ENCODE measurements at regions of chr12 and their contacts with region 1.

Region 1: GRCh38 chr12:54005853-54006686 is 2.7 kb upstream of the HOXC8 start:
- DNase-seq: peak; percentile 91
- H3K4me3 ChIP-seq: peak overlapping the region in 2 of 4 donors; percentile 13 to 16
- H3K27ac ChIP-seq: no peak overlapping the region
- H3K4me1 ChIP-seq: peaks cover 0 to 18% (median 15%) of the 10 kb centered on the region in 4 donors
- H3K27me3 ChIP-seq: peaks cover 82 to 100% (median 99%) of the 10 kb centered on the region in 3 donors
- CTCF ChIP-seq: peak; percentile 83 to 93 (median 89)
- EP300 ChIP-seq: no peak
- POLR2A ChIP-seq: no peak

Region 2: DNA sequence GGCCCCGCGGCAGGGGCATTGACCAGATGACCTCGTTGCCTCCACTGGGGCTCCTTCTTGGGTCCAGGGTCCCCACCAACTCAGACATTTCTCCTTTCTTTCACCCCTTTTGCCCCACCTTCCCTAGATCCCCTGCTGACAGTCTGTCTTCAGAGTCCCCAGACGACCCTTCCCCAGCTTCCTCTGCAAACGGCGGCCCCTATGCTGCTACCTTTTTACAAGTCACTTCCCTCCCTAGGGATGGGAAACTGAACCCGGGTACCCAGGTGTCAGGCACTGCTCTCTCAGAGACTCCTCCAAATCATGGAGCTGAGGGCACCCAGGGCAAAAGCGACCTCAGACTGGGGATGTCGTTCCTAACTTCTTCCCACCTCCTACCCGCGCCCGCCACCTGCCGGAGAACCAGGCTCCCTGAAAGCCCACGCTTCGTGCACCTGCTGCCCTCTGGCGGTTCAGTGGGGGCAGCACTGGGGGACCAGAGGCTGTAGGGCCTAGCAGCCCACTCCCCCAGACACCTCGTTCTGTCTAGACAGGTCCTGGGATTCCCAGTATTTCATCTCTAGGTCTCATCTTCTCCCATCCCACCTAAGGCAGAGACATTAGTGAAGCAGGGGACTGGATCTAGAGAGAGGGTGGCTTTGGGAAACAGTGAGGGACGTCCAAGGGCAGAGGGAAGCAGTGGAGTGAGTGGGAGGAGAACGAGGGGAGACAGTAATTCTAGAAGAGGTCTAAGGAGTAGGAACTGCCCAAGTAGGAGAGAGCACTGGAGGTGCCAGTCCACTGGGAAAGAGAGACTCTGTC is 373.5 kb after region 1 on chr12:
- intact Hi-C with region 1: loop called (anchors 10 kb)
- DNase-seq: peak; percentile 96
- H3K4me3 ChIP-seq: peak overlapping the region; percentile 32 to 57 (median 55)
- H3K27ac ChIP-seq: peak overlapping the region; percentile 77 to 84 (median 79)
- H3K4me1 ChIP-seq: peaks cover 0 to 26% (median 18%) of the 10 kb centered on the region in 4 donors
- H3K27me3 ChIP-seq: no peaks in the 10 kb centered on the region
- CTCF ChIP-seq: peak; percentile 100
- EP300 ChIP-seq: no peak
- POLR2A ChIP-seq: no peak